BJ (cell line): ENCODE measurements at regions of chr6 and their contacts with region 1.

Region 1: DNA sequence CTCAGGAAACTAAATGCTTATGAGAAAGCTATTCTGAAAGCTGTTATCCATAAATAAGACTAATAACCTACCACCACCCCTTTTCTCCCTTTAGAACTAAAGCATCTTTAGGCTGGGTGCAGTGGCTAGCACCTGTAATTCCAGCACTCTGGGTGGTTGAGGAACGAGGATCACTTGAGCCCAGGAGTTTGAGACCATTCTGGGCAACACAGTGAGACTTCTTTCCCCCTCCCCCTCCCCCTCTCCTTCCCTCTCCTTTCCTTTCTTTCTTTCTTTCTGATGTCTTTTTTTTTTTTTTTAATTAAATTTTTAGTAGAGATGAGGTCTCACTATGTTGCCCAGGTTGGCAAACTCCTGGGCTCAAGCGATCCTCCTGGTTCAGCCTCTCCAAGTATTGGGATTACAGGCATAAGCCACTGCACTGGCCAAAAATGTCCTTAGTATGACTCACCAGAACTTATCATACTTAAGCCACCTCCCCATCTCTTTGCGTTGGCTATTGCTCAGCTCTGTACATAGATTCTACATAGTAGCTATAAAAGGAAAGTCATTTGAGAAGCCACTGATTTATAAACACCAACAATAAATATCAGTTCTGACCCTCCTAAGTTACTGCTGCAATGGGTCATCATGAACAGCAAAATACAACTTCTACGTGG is 54.8 kb upstream of the SPDEF start:
- DNase-seq: peak; percentile 9
- H3K4me3 ChIP-seq: no peak overlapping the region
- H3K27me3 ChIP-seq: no peaks in the 10 kb centered on the region
- CTCF ChIP-seq: no peak

Region 2: DNA sequence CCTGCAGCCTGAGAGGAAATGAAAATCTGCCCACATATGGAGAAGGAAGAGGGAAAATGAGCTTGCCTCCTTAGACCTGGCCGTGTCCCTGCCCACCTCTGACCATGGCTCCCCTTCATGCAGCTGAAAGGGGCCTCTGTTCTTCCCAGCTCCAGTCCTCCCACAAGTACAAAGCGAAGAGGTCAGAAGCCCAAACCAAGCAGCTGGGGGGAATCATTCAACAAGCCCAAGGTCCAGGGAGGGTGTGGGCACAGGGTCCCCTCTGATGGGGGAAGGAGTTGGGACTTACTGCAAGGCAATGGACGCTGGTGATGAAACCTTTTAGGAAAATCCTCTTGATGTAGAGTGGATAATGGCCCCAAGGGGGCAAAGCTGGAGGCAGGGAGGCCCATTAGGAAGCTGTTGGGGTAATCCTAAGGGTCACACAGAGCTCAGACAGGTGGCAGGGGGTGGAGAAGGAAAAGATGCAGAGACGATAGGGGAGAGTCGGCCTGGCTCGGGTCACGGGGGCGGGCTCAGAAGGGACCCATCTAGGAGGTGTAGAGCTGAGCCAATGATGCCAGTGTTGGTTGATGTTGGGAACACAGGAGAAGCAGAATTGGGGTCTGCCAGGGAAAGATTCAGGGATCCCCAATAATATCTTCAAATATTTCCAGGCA is 449.0 kb before region 1 on chr6:
- CTCF ChIA-PET with region 1: interaction called, 17 read pairs
- POLR2A ChIA-PET with region 1: interaction called, 4 read pairs
- DNase-seq: no peak
- H3K4me3 ChIP-seq: no peak overlapping the region
- H3K27me3 ChIP-seq: no peaks in the 10 kb centered on the region; the same call in 1 of the 2 replicates
- CTCF ChIP-seq: no peak

Region 3: GRCh38 chr6:34202329-34203201 is 408.4 kb before region 1 on chr6:
- CTCF ChIA-PET with region 1: interaction called, 11 read pairs
- POLR2A ChIA-PET with region 1: no interaction called
- DNase-seq: no peak
- H3K4me3 ChIP-seq: no peak overlapping the region
- H3K27me3 ChIP-seq: no peaks in the 10 kb centered on the region
- CTCF ChIP-seq: no peak

Region 4: DNA sequence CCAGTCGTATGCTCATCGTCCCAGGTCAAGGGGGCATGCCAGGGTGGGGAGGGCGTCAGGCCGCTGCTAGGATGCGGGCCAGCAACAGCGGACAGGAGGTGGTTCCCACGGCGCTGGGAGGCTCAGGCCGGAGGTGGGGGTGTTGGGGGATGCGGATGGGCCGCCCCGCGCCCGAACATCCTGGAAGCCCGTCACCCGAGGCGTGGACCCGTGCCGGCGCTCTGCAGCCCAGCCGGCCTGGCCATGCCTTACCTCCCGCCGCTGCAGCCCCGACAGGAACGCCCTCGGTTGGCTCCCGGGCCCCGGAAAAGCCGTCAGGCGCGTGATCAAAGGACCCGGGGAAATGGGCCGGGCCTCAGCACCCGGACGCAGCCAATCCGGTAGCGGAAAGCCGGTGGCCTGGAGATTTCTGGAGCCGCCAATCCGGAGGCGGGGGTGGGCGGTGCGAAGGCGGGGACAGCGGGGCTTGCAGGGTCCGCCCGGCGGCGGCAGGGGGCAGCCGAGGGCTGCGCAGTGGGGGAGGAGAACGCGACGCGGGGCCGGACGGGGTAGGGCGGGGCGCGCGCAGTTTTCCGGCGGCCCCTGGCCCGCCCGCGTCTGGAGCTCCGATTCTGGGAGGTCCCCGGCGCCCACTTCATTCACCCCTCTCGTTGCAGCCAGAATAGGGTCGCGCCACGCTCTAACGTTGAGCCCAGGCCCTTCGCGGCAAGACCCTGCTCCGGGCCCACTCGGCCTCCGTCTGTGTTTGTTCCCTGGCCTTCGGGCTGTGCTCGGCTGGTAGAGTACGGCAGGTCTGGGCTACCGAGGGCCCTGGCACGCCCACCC is 362.0 kb before region 1 on chr6 and contains the start of gene SMIM29:
- CTCF ChIA-PET with region 1: interaction called, 22 read pairs
- POLR2A ChIA-PET with region 1: no interaction called
- DNase-seq: no peak
- H3K4me3 ChIP-seq: peak within 1 kb of the TSS; percentile 79
- H3K27me3 ChIP-seq: no peaks in the 10 kb centered on the region
- CTCF ChIP-seq: peak; percentile 67
- polyA plus RNA-seq, gene SMIM29: 16.3 and 29.5 TPM in 2 replicates

Region 5: GRCh38 chr6:34459899-34460593 is 150.9 kb before region 1 on chr6:
- CTCF ChIA-PET with region 1: interaction called, 22 read pairs
- POLR2A ChIA-PET with region 1: no interaction called
- DNase-seq: no peak
- H3K4me3 ChIP-seq: no peak overlapping the region
- H3K27me3 ChIP-seq: no peaks in the 10 kb centered on the region
- CTCF ChIP-seq: peak; percentile 66

Region 6: DNA sequence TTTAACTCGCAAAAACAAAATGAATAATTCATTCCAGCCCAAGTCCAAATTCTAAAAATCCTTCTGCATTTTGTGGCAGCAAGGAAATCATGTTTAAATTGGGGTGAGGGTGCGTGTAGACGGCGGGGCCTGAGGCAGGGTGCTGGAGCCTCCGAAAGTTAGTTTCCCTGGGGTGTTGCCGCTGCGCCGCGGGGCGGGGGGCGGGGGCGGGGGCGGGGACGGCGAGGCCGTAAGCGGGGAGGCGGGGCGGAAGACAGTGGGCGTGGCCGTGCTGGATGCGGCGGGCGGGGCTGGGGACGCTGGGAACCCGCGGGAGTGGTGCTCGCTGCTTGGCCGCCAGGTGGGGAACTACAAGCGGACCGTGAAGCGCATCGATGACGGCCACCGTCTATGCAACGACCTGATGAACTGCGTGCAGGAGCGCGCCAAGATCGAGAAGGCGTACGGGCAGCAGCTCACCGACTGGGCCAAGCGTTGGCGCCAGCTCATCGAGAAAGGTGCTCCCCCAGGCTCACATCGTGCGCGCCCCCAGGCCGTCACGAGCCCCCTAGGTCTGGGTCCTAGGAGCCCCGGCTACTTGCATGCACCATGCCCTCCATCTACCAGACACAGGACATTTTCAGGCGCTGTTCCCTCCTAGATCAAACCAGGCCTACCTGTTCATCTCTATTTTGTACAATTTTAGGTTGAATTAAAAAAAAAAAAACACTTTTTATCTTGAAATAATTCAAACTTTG is 83.8 kb before region 1 on chr6:
- CTCF ChIA-PET with region 1: interaction called, 12 read pairs
- POLR2A ChIA-PET with region 1: no interaction called
- DNase-seq: peak; percentile 17
- H3K4me3 ChIP-seq: no peak overlapping the region
- H3K27me3 ChIP-seq: 0 out of 2 replicates have a peak, but pooled peaks cover 3% of the 10 kb centered on the region
- CTCF ChIP-seq: peak; percentile 79

Region 7: GRCh38 chr6:34680802-34681515 is 70.0 kb after region 1 on chr6:
- CTCF ChIA-PET with region 1: no interaction called
- POLR2A ChIA-PET with region 1: no interaction called
- DNase-seq: no peak
- H3K4me3 ChIP-seq: no peak overlapping the region
- H3K27me3 ChIP-seq: no peaks in the 10 kb centered on the region
- CTCF ChIP-seq: no peak

Region 8: DNA sequence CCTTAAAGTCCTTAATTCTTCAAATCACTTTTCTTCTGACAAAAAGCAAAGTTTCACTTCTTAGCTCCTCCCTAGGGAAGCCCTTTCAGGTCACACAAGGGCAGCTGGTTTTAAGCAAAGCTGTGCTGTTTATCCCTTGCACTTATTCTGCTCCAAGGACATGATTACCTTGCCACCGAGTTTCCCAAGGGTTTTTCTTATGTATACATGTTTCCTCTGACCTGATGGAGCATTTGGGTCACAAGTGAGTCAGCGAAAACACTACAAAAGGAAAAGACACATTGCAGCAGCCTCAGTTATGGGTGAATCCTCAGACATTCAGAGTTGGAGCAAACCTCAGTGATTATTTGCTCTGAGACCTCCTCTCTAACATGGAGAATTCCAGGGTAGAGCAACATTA is 112.3 kb after region 1 on chr6:
- CTCF ChIA-PET with region 1: no interaction called
- POLR2A ChIA-PET with region 1: no interaction called
- DNase-seq: no peak
- H3K4me3 ChIP-seq: no peak overlapping the region
- H3K27me3 ChIP-seq: no peaks in the 10 kb centered on the region
- CTCF ChIP-seq: no peak